ENCODE measurements at regions of chr3 and their contacts with region 1.

Region 1: DNA sequence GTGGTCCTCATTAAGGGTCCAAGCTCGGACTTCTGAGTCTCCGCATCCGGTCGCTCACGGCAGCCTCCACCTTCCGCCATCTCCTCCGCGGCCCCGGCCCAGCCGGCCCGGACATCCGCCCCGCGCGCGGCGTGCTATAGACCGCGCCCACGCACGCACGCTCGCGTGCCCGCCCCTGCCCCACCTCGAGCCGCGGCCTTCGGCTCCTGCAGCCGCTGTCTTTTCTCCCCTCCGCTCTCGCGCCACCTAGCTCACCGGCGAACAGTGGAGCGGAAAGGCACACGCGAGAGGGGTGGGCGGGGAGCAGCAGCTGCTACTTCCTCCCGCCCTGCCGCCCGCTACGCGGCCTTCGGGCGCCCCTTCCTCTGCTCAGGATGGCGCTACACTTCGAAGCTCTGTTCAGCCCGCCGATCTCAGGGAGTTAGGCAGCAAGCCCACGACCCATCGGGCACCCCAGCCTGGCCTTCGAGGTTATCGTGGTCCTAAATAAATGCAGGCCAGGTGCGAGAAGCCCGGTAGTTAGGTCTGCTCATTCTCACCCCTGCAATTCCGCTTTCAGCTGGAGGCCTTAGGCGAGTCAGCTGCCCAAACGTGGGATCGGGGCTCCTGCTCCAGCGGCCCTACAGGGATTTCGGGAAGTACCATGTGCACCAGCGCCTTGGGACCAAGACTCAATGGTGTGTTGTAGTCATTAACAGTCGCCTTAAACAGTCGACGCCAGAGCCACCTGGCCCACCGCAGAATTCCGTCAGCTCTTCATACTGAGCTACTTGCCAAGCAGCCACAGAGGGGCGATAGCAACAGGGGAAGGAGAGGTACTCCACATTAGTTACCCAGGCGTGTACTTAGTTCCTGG is at the start of gene USP4:
- DNase-seq: peak; percentile 98
- ATAC-seq: peak; percentile 98
- total RNA-seq, gene USP4: 39.4 TPM

Region 2: DNA sequence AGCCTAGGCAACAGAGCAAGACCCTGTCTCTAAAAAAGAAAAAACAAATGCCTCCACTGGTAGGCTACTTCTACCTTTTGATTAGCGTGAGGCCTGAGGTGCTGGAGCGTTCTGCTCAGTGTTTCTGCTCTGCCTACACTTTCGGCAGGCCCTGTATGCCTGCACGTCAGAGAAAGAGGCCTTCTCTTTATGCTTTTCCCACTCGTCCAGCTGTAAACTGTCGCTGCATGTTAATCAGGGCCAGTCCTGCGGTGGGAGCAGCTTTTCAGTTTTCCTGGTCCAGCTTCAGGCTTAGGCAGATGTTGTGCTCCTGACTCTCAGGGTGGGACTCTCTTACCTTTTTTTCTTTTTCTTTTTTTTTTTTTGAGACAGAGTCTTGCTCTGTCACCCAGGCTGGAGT is 1786.8 kb before region 1 on chr3:
- intact Hi-C with region 1: no loop called
- DNase-seq: no peak
- ATAC-seq: no peak

Region 3: GRCh38 chr3:49358217-49358883 is 18.2 kb after region 1 on chr3 and contains the start of gene GPX1:
- intact Hi-C with region 1: loop called (anchors 2 kb)
- DNase-seq: peak; percentile 97
- ATAC-seq: peak; percentile 96
- total RNA-seq, gene GPX1: 136 TPM

Region 4: GRCh38 chr3:49411968-49412631 is 71.9 kb after region 1 on chr3 and contains the starts of genes RHOA and TCTA:
- intact Hi-C with region 1: loop called (anchors 2 kb)
- DNase-seq: peak; percentile 100
- ATAC-seq: peak; percentile 96
- total RNA-seq, gene RHOA: 285 TPM
- total RNA-seq, gene TCTA: 17.1 TPM

Region 5: GRCh38 chr3:49454458-49454857 is 114.3 kb after region 1 on chr3:
- intact Hi-C with region 1: loop called (anchors 1 kb)
- DNase-seq: no peak
- ATAC-seq: peak; percentile 71